ENCODE measurements at regions of chr19 and their contacts with region 1.

Region 1: GRCh38 chr19:45439569-45440254 is 16.0 kb upstream of the ERCC1 start:
- DNase-seq: peak; percentile 91 to 96
- ATAC-seq: peak; percentile 82 to 87 (median 84)
- H3K4me3 ChIP-seq: peak overlapping the region; percentile 83
- H3K27ac ChIP-seq: peak overlapping the region; percentile 95
- H3K4me1 ChIP-seq: peaks cover 14% of the 10 kb centered on the region
- H3K27me3 ChIP-seq: no peaks in the 10 kb centered on the region
- CTCF ChIP-seq: peak; percentile 100

Region 2: GRCh38 chr19:45423589-45424190 is 16.0 kb before region 1 on chr19 and contains the start of gene ERCC1:
- intact Hi-C with region 1: no loop called
- DNase-seq: peak; percentile 95
- ATAC-seq: peak; percentile 70 to 83 (median 78)
- H3K4me3 ChIP-seq: peak within 1 kb of the TSS; percentile 65
- H3K27ac ChIP-seq: peak within 1 kb of the TSS; percentile 94
- H3K4me1 ChIP-seq: peaks cover 23% of the 10 kb centered on the region
- H3K27me3 ChIP-seq: no peaks in the 10 kb centered on the region
- CTCF ChIP-seq: no peak
- total RNA-seq, gene ERCC1: 59.5 to 145 (median 74.2) TPM

Region 3: DNA sequence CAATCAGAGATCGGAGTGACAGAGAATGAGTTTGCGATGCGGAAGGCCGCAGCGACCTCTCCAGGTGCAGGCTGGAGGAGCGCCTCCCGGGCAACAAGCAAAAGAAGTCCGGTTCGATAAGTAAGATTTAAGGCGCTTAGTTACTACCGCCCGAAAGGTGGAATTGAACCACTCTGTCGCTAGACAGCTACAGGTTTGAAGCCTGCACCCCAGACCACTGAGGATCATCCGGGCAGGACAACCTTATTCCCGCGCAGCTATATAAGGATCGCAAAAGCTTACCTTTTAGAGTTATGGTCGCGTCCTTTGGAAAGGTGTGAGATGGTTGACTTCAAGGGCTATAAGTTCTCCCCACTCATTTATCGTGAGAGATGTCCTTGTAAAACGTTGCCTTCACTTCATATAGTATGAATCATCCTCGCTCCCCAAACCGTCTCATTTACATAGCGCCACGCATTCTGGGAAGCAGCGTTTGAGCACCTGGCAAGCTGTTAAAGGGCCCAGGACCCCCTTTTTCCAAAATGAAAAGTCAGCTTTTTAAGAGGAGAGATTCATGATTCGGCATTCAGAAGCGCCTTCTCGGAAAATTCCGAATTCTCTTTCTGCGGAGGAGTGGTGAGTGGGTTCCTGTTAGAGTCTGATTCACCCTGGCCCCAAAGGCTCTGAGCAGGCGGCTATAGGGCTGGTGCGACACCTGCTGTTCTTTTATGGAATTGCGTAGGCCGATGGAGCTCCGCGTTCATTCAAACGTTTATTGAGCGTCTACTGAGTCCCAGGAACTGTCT is 38.9 kb after region 1 on chr19:
- intact Hi-C with region 1: loop called (anchors 1 to 2 kb)
- DNase-seq: peak; percentile 79 to 90
- ATAC-seq: peak; percentile 90 to 92 (median 90)
- H3K4me3 ChIP-seq: peak overlapping the region; percentile 66
- H3K27ac ChIP-seq: peak overlapping the region; percentile 92
- H3K4me1 ChIP-seq: peaks cover 9% of the 10 kb centered on the region
- H3K27me3 ChIP-seq: no peaks in the 10 kb centered on the region
- CTCF ChIP-seq: peak; percentile 95

Region 4: DNA sequence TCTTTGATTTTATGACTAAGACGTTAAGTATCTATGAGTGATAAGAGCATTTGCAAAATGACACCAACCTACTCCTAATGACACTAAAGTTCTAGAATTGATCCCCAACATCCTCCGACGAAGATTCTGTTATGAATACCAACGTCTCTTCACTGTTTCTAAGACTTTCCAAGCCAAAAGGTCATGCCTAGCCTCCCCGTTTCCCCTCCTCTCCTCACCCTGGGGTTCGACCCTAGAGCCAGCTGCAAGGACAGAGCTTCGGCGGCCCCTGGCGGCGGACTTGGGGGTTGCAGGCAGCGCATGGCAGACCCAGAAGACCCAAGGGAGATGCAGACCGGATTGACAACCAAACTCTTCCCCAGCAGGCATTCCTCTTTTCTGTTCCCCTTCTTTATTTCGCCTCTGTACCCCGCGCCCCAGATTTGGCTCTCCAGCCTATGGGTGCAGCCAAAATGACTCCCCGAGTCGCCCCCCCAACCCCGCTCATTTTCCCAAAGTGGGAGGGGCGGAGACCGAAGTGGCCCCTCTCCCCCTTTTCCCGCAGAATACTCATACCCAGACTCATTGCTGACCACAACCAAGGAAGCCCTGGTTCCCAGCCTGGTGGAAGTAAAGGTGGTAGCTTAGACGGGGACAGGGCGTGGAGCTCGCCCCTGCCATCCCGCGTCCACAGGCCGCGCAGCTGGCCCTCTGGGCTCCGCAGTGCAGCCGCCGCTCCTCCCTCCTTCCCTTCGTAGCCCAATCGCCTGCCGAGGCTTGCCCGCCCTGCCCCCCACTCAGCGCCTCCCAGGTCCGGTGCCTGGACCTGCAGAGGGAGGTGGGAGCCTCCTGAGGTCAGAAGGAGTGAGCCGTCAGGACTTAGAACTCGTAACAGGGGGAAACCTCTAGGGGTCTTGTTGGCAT is 203.6 kb after region 1 on chr19:
- intact Hi-C with region 1: loop called in 1 of 2 experiments (anchors 5 kb)
- DNase-seq: peak; percentile 83 to 91
- ATAC-seq: peak; percentile 58 to 77 (median 72)
- H3K4me3 ChIP-seq: no peak overlapping the region
- H3K27ac ChIP-seq: no peak overlapping the region
- H3K4me1 ChIP-seq: peaks cover 19% of the 10 kb centered on the region
- H3K27me3 ChIP-seq: peaks cover 0 to 31% (median 0%) of the 10 kb centered on the region in 3 donors
- CTCF ChIP-seq: peak; percentile 99